ENCODE measurements at regions of chr20 and their contacts with region 1.

Region 1: DNA sequence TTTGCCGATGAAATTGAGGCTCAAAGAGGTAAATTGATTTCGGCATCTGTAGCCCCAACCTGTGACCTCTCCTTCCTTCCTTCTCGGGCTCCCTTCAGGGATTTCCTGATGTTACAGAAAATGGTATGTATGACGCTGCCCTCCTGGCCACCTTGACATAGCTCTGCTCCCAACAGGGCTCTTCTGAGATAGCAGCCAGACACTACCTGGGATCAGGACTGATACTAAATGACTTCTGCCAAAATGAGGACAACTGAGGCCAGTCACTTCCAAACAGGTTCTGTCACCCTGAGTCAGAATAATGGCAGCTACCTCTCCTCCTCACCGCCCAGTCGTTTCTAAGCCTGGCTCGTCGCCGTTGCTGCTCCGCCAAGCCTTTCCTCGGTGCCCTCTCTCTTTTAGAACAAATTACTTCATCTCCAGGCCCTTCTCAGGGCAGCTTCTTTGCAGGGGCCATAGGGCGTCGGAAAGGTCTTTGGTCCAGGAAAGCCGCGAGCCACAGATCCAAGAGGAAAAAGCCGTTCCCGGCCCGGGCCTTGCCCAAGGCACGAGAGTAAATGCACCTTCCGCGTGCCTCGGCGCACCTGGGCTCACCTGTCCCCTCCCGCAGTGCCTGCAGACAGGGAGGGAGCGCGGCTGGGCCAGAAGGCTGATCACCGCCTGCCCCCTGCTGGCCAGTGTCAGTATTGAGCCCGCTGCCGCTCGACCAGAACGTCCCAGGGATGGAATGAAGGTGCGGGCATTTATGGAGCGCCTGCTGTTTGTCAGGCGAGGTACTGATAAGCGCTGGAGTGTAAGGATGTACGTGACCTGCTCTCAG is 904 bp upstream of the LPIN3 start:
- DNase-seq: peak; percentile 80 to 97
- H3K4me3 ChIP-seq: peak overlapping the region; percentile 54
- H3K27ac ChIP-seq: no peak overlapping the region
- H3K4me1 ChIP-seq: peaks cover 15% of the 10 kb centered on the region
- H3K27me3 ChIP-seq: no peaks in the 10 kb centered on the region
- CTCF ChIP-seq: peak; percentile 100

Region 2: GRCh38 chr20:41119546-41120235 is 220.0 kb before region 1 on chr20:
- CTCF ChIA-PET with region 1: interaction called, 12 read pairs
- POLR2A ChIA-PET with region 1: no interaction called
- intact Hi-C with region 1: no loop called
- DNase-seq: no peak
- H3K4me3 ChIP-seq: no peak overlapping the region
- H3K27ac ChIP-seq: no peak overlapping the region
- H3K4me1 ChIP-seq: no peaks in the 10 kb centered on the region
- H3K27me3 ChIP-seq: no peaks in the 10 kb centered on the region
- CTCF ChIP-seq: no peak

Region 3: GRCh38 chr20:41187668-41188067 is 152.0 kb before region 1 on chr20:
- CTCF ChIA-PET with region 1: interaction called, 12 read pairs
- POLR2A ChIA-PET with region 1: no interaction called
- intact Hi-C with region 1: no loop called
- DNase-seq: no peak
- H3K4me3 ChIP-seq: no peak overlapping the region
- H3K27ac ChIP-seq: no peak overlapping the region
- H3K4me1 ChIP-seq: no peaks in the 10 kb centered on the region
- H3K27me3 ChIP-seq: no peaks in the 10 kb centered on the region
- CTCF ChIP-seq: no peak

Region 4: DNA sequence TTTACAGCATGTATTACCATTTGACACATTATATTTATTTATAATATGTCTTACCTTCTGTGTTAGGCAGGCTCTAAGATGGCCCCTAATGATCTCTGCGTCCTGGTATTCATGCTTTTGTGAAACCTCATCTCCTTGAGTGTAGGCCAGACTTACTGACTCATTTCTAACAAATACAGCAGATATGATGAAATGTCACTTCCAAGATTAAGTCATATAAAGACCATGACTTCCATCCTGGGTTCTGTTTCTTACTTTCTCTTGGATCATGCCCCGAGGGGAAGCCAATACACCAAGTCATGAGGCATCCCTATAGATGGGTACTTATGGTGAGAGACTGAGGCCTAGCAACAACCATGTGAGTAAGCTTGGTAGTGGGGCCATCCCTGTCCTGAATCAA is 52.4 kb before region 1 on chr20:
- CTCF ChIA-PET with region 1: no interaction called
- POLR2A ChIA-PET with region 1: interaction called, 16 read pairs
- intact Hi-C with region 1: no loop called
- DNase-seq: no peak
- H3K4me3 ChIP-seq: no peak overlapping the region
- H3K27ac ChIP-seq: no peak overlapping the region
- H3K4me1 ChIP-seq: no peaks in the 10 kb centered on the region
- H3K27me3 ChIP-seq: no peaks in the 10 kb centered on the region
- CTCF ChIP-seq: no peak

Region 5: DNA sequence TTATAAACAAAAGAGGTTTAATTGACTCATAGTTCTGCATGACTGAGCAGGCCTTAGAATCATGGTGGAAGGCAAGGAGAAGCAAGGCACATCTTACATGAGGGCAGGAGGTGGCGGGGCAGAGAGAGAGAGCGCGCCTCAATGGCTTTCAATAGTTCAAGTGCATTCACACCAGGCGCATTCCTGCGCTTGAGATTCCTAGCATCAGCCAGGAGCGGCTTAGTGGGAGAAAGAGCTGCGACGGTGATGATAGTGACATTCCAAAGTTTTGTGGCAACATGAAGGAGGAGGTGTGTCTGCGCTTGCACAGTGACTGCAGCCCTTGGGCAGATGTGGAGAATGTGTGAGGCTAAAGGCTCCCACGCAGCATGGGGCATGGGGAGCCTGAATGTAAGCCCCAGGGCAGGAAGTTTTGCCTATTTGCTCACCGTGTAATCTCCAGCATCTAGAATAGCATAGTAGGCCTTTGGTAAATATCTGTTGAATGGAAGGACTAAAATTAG is 51.9 kb after region 1 on chr20:
- CTCF ChIA-PET with region 1: no interaction called
- POLR2A ChIA-PET with region 1: no interaction called
- intact Hi-C with region 1: loop called (anchors 2 kb)
- DNase-seq: peak; percentile 81 to 95
- H3K4me3 ChIP-seq: no peak overlapping the region
- H3K27ac ChIP-seq: peak overlapping the region; percentile 65
- H3K4me1 ChIP-seq: peaks cover 24% of the 10 kb centered on the region
- H3K27me3 ChIP-seq: no peaks in the 10 kb centered on the region
- CTCF ChIP-seq: no peak

Region 6: DNA sequence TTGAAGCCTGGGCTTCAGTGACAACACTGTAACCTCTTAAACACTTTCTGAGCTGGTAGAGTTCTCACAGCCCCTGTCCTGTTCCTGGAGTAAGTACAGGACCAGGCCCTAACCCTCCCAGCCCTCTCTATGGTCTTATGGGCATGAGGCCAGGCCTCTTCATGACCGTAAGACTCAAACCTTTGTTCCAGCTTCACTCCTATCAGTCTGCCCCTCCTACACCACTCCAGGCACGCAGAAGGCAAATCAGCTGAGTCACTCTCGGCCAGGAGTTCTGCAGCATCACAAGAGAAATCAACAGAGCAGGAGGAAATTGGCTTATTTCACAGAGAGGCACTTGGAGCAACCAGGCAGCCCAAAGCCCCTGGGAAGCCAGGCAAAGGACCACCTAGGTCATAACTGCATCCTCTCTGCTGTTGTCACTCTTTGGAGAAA is 303.8 kb after region 1 on chr20:
- CTCF ChIA-PET with region 1: no interaction called
- POLR2A ChIA-PET with region 1: interaction called, 22 read pairs
- intact Hi-C with region 1: no loop called
- DNase-seq: peak; percentile 80 to 83
- H3K4me3 ChIP-seq: no peak overlapping the region
- H3K27ac ChIP-seq: peak overlapping the region; percentile 44
- H3K4me1 ChIP-seq: peaks cover 22% of the 10 kb centered on the region
- H3K27me3 ChIP-seq: peaks cover 3% of the 10 kb centered on the region; the same call in 1 of the 2 replicates
- CTCF ChIP-seq: no peak

Region 7: GRCh38 chr20:43187476-43188233 is 1847.9 kb after region 1 on chr20:
- CTCF ChIA-PET with region 1: no interaction called
- POLR2A ChIA-PET with region 1: no interaction called
- intact Hi-C with region 1: loop called (anchors 5 kb)
- DNase-seq: peak in 1 of 2 experiments; percentile 75
- H3K4me3 ChIP-seq: no peak overlapping the region
- H3K27ac ChIP-seq: no peak overlapping the region
- H3K4me1 ChIP-seq: no peaks in the 10 kb centered on the region
- H3K27me3 ChIP-seq: peaks cover 50% of the 10 kb centered on the region
- CTCF ChIP-seq: peak; percentile 98